Ascending aorta (tissue), 2 donors: ENCODE measurements at regions of chr22 and their contacts with region 1.

Region 1: DNA sequence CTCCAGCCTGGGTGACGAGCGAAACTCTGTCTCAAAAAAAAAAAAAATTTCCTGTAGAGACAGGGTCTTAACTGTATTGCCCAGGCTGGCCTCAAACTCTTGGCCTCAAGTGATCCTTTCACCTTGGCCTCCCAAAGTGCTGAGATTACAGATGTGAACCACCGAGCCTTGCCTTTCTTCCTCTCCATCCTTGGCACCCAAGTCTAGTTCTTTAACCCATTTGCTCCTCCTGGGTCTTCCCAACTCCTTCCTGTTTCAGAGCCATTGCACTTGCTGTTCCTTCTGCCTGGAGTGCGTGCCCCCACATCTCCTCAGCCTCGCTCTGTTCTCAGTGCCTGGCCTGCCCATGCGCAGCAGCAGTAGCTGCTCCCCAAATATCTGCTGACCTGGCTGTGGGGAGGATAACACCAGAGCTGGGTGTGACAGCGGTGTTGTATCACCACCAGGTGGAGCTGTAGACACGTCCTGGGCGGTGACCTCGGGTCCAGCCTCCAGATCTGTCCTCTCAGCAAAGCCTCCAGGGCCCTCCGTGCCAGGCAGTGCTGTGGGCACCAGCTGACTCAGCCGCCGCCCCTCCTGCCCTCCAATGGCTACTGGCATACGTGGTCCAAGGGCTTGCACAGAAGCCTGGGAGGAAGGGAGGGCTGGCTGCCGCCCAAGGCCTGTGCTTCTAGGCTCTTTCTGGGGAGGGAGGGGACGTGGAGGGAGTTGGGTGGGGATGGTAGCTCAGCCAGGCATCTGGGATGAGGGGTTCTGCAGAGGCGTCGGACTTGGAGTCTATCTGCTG is 22.0 kb downstream of the TEF start:
- DNase-seq: peak; percentile 95 to 99
- H3K4me3 ChIP-seq: no peak overlapping the region
- H3K27ac ChIP-seq: peak overlapping the region; percentile 43 to 61
- H3K4me1 ChIP-seq: peaks cover 0 to 10% of the 10 kb centered on the region in 2 donors
- H3K27me3 ChIP-seq: no peaks in the 10 kb centered on the region
- CTCF ChIP-seq: peak; percentile 95 to 99 (median 98)

Region 2: GRCh38 chr22:41123151-41123550 is 280.6 kb before region 1 on chr22:
- intact Hi-C with region 1: no loop called
- DNase-seq: no peak
- H3K4me3 ChIP-seq: no peak overlapping the region
- H3K27ac ChIP-seq: no peak overlapping the region
- H3K4me1 ChIP-seq: no peaks in the 10 kb centered on the region
- H3K27me3 ChIP-seq: no peaks in the 10 kb centered on the region
- CTCF ChIP-seq: no peak

Region 3: DNA sequence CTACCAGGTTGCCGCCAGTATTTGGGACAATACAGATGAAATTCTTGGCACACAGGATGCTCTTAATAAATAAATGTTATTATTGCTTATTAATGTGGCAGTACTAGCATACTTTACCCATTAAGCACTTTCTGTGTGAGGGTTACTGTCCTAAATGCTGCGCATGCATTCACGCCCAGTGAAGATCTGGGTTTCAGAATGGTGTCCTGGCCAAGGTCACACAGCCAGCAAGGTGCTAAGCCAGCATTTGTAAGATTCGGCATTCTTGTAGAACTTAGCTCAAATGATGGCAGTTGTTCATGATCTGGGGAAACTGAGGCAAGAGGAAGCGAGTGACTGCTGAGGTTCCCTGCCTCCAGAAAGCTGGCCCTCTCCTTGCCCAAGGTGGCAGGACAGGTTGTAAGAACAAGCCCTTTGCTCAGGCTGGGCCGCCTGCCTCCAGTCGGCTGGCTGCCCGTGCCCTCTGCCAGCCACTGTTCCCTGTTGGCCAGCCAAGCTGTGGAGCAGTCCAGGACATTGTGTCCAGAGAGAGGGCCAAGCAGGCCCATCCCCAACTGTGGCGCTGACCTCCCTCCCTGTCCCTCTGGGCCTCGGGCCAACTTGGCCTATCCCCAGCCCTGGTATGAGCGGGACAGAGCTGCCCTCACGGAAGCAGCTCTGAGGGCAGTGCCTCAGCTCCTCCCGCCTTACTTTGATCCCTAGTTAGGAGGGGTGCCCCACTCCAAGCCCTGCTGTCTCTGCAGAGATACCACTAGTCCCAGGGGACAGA is 14.1 kb after region 1 on chr22:
- intact Hi-C with region 1: loop called (anchors 1 kb)
- DNase-seq: peak; percentile 85 to 98
- H3K4me3 ChIP-seq: peak overlapping the region; percentile 25 to 32
- H3K27ac ChIP-seq: peak overlapping the region; percentile 96 to 99
- H3K4me1 ChIP-seq: peaks cover 8 to 34% of the 10 kb centered on the region in 2 donors
- H3K27me3 ChIP-seq: no peaks in the 10 kb centered on the region
- CTCF ChIP-seq: peak in 1 of 3 experiments; percentile 6

Region 4: GRCh38 chr22:41998361-41999275 is 594.9 kb after region 1 on chr22 and contains the start of gene WBP2NL:
- intact Hi-C with region 1: no loop called
- DNase-seq: peak; percentile 45 to 81
- H3K4me3 ChIP-seq: peak within 1 kb of the TSS; percentile 49 to 59
- H3K27ac ChIP-seq: no peak within 1 kb of the TSS
- H3K4me1 ChIP-seq: no peaks in the 10 kb centered on the region
- H3K27me3 ChIP-seq: no peaks in the 10 kb centered on the region
- CTCF ChIP-seq: no peak
- total RNA-seq, gene WBP2NL: not detected